ENCODE measurements at regions of chr22 and their contacts with region 1.

Region 1: DNA sequence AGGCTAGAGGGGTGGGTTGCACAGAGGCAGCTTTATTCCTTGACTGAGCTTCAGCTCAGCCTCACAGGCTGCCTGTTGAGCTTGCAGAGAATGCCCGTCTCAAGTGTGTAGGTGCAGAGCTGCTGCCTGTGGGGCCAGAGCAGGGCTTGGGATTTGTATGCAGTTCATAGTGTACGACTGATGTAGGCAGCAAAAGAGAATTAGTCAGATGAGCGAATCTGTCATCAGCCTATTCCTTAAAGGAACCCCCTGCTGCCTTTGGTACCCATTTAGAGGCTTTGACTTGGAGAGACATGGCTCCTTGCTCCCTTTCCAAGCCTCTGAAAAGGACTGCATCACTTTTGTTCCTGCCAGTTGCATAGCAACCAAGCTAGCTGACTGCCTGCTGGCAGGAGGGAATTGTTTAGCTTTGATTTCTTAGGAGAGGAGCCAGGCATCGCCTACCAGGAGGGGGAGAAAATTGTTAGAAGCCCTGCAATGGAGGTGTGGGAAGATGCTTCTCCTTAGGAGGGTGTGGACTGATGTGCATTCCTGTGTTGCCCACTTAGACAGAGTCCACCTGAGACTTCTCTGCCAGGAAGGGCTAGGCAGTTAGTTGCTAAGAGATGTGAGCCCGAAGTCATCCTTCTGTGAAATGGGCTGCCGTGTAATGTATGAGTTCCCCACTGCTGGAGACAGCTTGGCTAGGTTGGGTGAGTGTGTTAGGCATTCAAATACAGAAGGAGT is 10.9 kb downstream of the ACO2 start:
- DNase-seq: peak in 1 of 2 donors; percentile 68
- H3K4me3 ChIP-seq: no peak overlapping the region
- H3K27ac ChIP-seq: peak overlapping the region; percentile 76 to 85
- H3K4me1 ChIP-seq: peaks cover 25 to 47% of the 10 kb centered on the region in 2 donors
- H3K27me3 ChIP-seq: no peaks in the 10 kb centered on the region
- CTCF ChIP-seq: no peak

Region 2: GRCh38 chr22:41411021-41411851 is 68.6 kb before region 1 on chr22:
- intact Hi-C with region 1: loop called (anchors 2 kb)
- DNase-seq: peak in 1 of 2 donors; percentile 77
- H3K4me3 ChIP-seq: peak overlapping the region in 1 of 2 donors; percentile 16
- H3K27ac ChIP-seq: peak overlapping the region; percentile 96 to 99
- H3K4me1 ChIP-seq: peaks cover 18 to 52% of the 10 kb centered on the region in 2 donors
- H3K27me3 ChIP-seq: no peaks in the 10 kb centered on the region
- CTCF ChIP-seq: no peak

Region 3: DNA sequence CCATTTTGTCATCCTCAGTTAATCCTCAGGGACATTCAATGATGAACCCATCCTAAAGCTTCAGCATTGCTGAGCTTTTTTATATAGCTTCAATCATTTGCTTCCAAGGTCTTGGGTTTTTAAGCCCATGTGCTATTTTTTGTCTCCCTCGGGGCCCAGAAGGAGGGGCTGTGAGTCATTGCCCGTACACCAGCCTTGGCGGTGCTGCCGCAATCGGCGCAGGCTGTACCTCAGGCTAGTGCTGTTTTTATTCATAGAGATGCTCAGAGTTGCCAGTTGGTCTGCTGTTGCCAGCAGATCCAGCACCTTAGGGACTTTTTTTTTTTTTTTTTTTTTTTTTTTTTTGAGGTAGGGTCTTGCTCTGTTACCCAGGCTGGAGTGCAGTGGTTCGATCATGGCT is 24.6 kb after region 1 on chr22:
- intact Hi-C with region 1: loop called (anchors 2 kb)
- DNase-seq: peak; percentile 51 to 89
- H3K4me3 ChIP-seq: no peak overlapping the region
- H3K27ac ChIP-seq: peak overlapping the region; percentile 56 to 85
- H3K4me1 ChIP-seq: peaks cover 16 to 30% of the 10 kb centered on the region in 2 donors
- H3K27me3 ChIP-seq: no peaks in the 10 kb centered on the region
- CTCF ChIP-seq: no peak